Calu3 (cell line): ENCODE measurements at regions of chr5 and their contacts with region 1.

Region 1: DNA sequence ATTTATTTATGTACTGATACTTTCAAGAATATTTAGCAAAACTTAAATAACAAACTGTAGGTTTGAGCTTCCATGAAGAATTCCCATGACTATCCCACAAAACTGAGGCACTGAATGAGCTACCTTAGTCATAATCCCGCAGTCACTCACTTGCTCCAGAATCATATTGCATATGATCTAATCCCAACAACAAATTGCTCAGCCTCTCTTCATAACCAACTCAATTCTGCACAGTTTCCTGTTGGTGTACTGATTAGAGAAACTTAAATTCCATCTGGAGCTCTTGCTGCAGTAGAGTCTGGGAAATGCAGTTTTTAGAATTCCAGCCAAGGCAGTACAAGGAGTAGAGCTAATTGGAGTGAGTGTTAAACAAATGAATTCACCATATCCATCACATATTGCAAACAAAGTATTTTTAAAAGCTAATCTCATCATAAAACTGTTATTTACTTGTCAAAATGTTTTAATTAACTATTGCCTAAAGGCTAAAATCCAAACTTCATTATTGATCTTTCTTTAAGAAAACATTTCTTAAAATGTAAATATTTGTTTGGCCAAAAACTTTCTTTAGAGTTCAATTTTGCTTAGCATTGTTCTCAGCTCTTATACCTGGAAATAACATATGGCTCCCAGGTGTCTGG is 35.8 kb upstream of the CDH18 start:
- DNase-seq: no peak
- H3K4me3 Mint-ChIP-seq: no peak overlapping the region
- H3K27ac Mint-ChIP-seq: no peak overlapping the region
- H3K4me1 Mint-ChIP-seq: no peaks in the 10 kb centered on the region
- H3K27me3 Mint-ChIP-seq: no peaks in the 10 kb centered on the region
- CTCF ChIP-seq: no peak

Region 2: GRCh38 chr5:19307580-19307979 is 716.2 kb before region 1 on chr5:
- CTCF ChIA-PET with region 1: no interaction called
- intact Hi-C with region 1: loop called (anchors 5 kb)
- DNase-seq: no peak
- H3K4me3 Mint-ChIP-seq: no peak overlapping the region
- H3K27ac Mint-ChIP-seq: no peak overlapping the region
- H3K4me1 Mint-ChIP-seq: no peaks in the 10 kb centered on the region
- H3K27me3 Mint-ChIP-seq: no peaks in the 10 kb centered on the region
- CTCF ChIP-seq: no peak

Region 3: DNA sequence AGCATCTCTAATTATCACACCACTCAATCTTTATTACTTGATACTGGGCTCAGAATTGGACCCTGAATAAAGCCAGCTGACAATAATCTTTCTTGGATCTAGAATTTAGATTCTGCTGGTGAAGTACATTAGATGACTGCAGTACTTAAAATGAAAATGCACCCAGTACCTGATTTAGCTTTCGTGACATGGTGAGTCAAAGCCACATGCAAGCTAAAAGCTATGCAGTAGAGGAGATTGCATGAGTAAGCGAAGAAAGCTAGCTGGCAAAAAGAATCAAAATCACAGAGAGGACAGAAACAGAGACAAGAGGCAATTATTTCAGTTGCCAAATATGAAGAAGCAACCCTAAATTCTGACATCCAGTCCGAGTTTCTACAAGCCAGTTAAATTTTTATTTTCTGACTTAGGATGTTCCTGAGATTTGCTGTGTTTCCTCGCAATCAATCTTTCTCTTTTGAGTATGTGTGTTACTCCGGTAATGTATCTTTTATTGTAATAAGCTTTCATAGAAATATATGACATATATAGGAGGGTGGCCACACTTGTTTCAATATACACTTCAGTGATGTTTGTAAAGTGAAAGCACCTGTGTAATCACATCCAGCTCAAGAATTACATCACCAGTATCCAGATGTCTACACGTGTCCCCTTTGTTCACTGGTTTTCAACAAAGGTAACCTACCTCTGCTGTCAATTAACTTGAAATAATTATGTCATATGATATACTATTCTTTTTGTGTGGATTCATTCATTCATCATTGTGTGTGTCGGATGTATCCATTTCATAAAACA is 137.5 kb before region 1 on chr5:
- CTCF ChIA-PET with region 1: no interaction called
- intact Hi-C with region 1: no loop called
- DNase-seq: no peak
- H3K4me3 Mint-ChIP-seq: no peak overlapping the region
- H3K27ac Mint-ChIP-seq: no peak overlapping the region
- H3K4me1 Mint-ChIP-seq: no peaks in the 10 kb centered on the region
- H3K27me3 Mint-ChIP-seq: no peaks in the 10 kb centered on the region
- CTCF ChIP-seq: no peak

Region 4: DNA sequence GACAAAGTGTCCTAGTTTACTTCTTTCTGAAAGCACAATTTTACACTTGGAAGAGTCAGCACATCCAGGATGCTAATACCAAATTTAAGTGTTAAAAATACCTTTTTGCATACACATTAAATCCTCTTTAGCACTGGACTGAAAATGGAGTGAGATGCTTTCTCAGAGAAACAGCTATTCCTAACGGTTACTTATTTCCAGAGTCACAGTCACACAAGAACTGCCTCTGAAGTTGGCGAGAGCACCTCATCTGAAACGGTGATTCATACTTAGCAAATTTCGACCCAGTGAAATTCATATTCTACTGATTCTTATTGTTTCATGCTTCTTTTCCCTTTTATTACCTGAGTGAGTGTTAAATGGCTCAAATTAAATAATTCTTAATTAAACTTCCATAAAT is 48.0 kb before region 1 on chr5:
- CTCF ChIA-PET with region 1: no interaction called
- intact Hi-C with region 1: no loop called
- DNase-seq: no peak
- H3K4me3 Mint-ChIP-seq: no peak overlapping the region
- H3K27ac Mint-ChIP-seq: no peak overlapping the region
- H3K4me1 Mint-ChIP-seq: no peaks in the 10 kb centered on the region
- H3K27me3 Mint-ChIP-seq: no peaks in the 10 kb centered on the region
- CTCF ChIP-seq: no peak